ENCODE measurements at regions of chr2 and their contacts with region 1.

Region 1: DNA sequence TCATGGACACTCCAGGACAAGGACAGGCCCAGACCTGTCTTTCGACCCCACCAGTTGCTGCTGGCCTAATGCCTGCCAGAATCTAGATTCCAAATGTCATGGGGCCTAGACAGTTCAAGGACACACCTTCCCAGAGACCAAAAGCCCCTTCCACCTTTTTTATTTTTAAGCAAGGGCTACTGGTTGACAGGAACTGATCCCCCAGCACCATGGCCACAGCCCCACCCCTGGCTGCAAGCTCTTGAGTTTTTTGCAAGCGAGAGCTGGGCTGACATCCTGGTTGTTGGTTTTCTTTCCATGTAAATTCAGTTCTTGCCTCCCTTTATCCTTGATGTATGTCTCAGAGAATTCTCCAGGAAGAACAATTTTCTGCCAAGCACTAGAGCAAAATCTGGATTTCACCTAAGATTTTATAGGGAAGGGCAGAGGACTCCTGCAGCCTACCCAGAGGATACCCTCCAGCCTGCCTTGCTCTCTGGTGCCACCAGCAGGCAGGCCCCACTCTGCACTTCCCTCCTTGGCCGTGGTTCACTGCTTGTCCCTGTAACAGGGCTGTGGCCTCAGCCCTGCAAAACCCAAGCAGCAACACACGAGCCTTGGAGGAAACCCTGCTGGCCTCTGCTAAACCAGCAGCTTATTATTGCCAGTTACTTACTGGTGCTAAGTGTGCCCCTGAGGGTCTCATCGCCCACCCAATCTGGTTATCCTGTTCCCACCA is 97.7 kb downstream of the TWIST2 start:
- DNase-seq: peak; percentile 74 to 81
- ATAC-seq: peak; percentile 72
- H3K4me3 ChIP-seq: no peak overlapping the region
- H3K27ac ChIP-seq: no peak overlapping the region
- H3K4me1 ChIP-seq: no peaks in the 10 kb centered on the region
- H3K27me3 ChIP-seq: no peaks in the 10 kb centered on the region

Region 2: GRCh38 chr2:238754259-238754658 is 191.3 kb before region 1 on chr2:
- intact Hi-C with region 1: no loop called
- DNase-seq: no peak
- ATAC-seq: no peak
- H3K4me3 ChIP-seq: no peak overlapping the region
- H3K27ac ChIP-seq: no peak overlapping the region
- H3K4me1 ChIP-seq: no peaks in the 10 kb centered on the region
- H3K27me3 ChIP-seq: no peaks in the 10 kb centered on the region

Region 3: GRCh38 chr2:238790126-238790832 is 155.3 kb before region 1 on chr2:
- intact Hi-C with region 1: no loop called
- DNase-seq: no peak
- ATAC-seq: no peak
- H3K4me3 ChIP-seq: no peak overlapping the region
- H3K27ac ChIP-seq: no peak overlapping the region
- H3K4me1 ChIP-seq: no peaks in the 10 kb centered on the region
- H3K27me3 ChIP-seq: no peaks in the 10 kb centered on the region

Region 4: GRCh38 chr2:238847841-238848690 is 97.5 kb before region 1 on chr2 and contains the start of gene TWIST2:
- intact Hi-C with region 1: loop called in 1 of 2 experiments (anchors 10 kb)
- DNase-seq: peak; percentile 91 to 94
- ATAC-seq: peak; percentile 86
- H3K4me3 ChIP-seq: peak within 1 kb of the TSS; percentile 68 to 90
- H3K27ac ChIP-seq: peak within 1 kb of the TSS; percentile 23 to 45
- H3K4me1 ChIP-seq: no peaks in the 10 kb centered on the region
- H3K27me3 ChIP-seq: no peaks in the 10 kb centered on the region
- total RNA-seq, gene TWIST2: 12.9 to 16.4 TPM

Region 5: GRCh38 chr2:239114119-239114581 is 168.6 kb after region 1 on chr2:
- intact Hi-C with region 1: no loop called
- DNase-seq: no peak
- ATAC-seq: no peak
- H3K4me3 ChIP-seq: no peak overlapping the region
- H3K27ac ChIP-seq: no peak overlapping the region
- H3K4me1 ChIP-seq: no peaks in the 10 kb centered on the region
- H3K27me3 ChIP-seq: no peaks in the 10 kb centered on the region

Region 6: DNA sequence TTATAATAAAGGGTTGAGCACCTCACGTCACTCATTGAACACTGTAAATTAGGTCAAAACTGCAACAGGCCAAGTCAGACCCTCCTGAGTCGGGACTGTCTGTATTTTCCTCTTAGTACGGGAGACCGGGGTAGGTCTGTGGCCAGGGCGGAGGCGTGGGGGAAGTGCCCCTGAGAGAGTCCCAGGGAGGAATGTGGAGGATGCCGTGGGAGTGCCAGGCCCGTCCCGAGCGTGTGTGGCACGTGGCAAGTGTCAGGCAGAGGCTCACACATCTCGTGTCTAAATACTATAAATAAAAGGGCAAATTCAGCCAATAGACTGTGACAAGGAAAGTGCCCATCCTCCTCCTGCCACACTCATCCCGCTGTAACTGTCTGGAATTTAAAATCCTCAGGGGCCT is 461.5 kb after region 1 on chr2:
- intact Hi-C with region 1: no loop called
- DNase-seq: peak in 1 of 2 donors; percentile 31
- ATAC-seq: no peak
- H3K4me3 ChIP-seq: no peak overlapping the region
- H3K27ac ChIP-seq: no peak overlapping the region
- H3K4me1 ChIP-seq: no peaks in the 10 kb centered on the region
- H3K27me3 ChIP-seq: no peaks in the 10 kb centered on the region